Activated naive CD4-positive, alpha-beta T cell treated with anti-CD3 and anti-CD28 coated beads for 36 hours (primary cell): ENCODE measurements at regions of chr12 and their contacts with region 1.

Region 1: DNA sequence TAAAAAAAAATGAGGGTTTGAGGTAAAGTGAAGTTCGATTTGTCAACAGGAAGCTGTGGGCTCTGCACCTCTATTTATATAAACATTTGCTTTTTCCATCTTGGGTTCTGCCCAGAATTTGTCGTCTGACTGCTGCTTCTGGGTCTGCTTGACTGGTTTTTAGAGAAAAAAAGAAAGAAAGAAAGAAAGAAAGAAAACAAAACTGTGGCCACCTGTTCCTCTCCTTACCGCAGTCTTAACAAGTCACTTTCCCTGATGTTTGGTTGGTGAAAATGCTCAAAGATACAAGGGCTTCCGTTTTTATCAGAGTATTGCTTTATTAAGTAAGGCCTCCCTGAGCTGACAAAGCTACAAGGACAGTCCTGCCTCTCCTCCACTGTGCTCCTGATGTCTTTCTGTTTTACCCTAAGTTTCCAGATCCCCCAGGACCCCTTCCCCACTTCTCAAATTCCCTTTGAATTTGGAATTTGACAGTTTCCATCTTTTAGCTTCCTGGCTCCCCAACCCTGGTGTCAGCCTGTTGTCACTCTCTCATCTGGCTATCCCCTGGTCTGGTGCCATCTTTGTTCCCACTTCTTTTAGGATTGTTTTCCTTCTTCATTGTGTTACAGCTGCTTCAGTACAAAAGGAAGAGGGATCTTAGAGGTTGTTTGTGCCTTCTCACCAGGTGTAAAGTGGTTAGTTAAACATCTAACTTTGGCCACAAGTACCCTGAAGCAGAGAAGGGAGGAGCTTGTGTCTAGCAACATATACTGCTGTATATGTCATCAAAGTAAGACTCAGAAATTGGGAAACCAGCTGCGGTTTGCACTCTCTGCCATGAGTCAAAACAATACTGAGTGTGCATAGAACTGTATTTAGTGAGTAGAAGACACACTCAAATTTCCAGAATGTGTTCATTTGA is 18.0 kb downstream of the MFAP5 start:
- DNase-seq: peak; percentile 85
- H3K4me3 Mint-ChIP-seq: peak overlapping the region; percentile 47
- H3K27ac Mint-ChIP-seq: peak overlapping the region; percentile 86
- H3K4me1 Mint-ChIP-seq: peaks cover 36% of the 10 kb centered on the region
- H3K27me3 Mint-ChIP-seq: no peaks in the 10 kb centered on the region

Region 2: GRCh38 chr12:8065991-8066594 is 578.5 kb before region 1 on chr12 and contains the start of gene C3AR1:
- CTCF ChIA-PET with region 1: no interaction called
- intact Hi-C with region 1: loop called (anchors 5 kb)
- DNase-seq: peak; percentile 44
- H3K4me3 Mint-ChIP-seq: peak within 1 kb of the TSS; percentile 22
- H3K27ac Mint-ChIP-seq: peak within 1 kb of the TSS; percentile 63
- H3K4me1 Mint-ChIP-seq: peaks cover 26% of the 10 kb centered on the region
- H3K27me3 Mint-ChIP-seq: no peaks in the 10 kb centered on the region
- total RNA-seq, gene C3AR1: 0.21 to 0.25 TPM

Region 3: DNA sequence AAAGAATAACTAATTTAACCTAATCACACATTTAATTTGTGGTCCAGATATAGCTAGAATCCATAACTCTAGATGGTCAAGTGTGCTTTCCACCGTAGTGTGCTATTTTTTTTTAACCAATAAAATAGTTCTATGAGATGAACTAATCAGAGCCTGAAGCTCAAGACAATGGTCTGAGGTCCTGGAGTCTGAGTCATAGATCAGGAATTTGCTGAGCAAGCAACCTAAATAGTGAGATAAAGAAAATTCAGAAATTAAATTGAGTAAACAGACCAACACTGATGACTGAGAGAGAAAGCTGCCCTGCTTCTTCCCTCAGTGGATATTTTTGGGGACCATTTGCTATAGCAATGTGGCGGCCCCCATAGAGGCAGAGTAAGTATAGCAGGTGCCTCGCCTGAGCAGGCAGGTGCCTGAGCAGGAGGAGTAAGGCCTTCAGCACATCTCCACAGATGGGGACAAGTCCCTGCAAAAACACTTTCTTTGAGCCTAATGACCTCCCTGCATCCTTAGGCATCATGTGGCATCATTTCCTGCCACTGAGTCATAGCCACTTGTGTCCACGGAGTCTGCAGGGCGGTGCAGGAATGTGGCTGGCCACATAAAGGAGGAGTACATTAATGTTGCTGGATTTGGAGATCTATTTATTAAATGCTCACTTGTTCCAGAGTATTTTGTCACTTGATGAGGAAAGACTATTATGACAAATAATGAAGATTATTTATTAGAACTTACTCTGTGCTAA is 90.0 kb before region 1 on chr12:
- CTCF ChIA-PET with region 1: no interaction called
- intact Hi-C with region 1: loop called (anchors 5 kb)
- DNase-seq: no peak
- H3K4me3 Mint-ChIP-seq: no peak overlapping the region
- H3K27ac Mint-ChIP-seq: no peak overlapping the region
- H3K4me1 Mint-ChIP-seq: peaks cover 11% of the 10 kb centered on the region
- H3K27me3 Mint-ChIP-seq: no peaks in the 10 kb centered on the region

Region 4: DNA sequence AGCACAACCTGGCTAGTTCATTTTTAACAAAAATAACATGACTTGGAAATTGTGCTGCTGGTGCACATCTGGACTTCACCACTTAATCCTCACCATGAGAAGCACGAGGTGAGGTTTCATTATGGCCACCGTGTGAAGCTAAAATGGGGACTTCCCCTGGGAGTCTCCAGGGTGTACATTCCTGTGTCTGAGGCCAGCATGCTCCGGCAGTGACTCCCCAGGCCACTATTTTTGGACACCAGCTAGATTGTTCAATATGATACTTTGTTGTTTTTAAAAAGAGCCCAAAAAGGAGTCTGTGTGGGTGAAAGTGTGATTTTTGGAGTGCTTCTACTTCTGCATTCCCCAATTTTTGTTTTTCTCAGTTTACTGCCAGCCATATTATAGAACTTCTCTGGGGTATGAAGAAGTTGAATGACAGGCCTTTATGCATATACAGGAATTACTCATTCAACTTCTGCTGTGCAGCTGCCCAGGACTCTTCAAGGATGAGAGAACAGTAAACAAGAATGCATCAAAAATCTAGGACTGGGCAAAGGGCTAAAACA is 15.0 kb before region 1 on chr12:
- CTCF ChIA-PET with region 1: no interaction called
- intact Hi-C with region 1: no loop called
- DNase-seq: no peak
- H3K4me3 Mint-ChIP-seq: no peak overlapping the region
- H3K27ac Mint-ChIP-seq: no peak overlapping the region
- H3K4me1 Mint-ChIP-seq: no peaks in the 10 kb centered on the region
- H3K27me3 Mint-ChIP-seq: peaks cover 2% of the 10 kb centered on the region

Region 5: GRCh38 chr12:8681041-8681902 is 36.7 kb after region 1 on chr12:
- CTCF ChIA-PET with region 1: no interaction called
- intact Hi-C with region 1: no loop called
- DNase-seq: no peak
- H3K4me3 Mint-ChIP-seq: no peak overlapping the region
- H3K27ac Mint-ChIP-seq: no peak overlapping the region
- H3K4me1 Mint-ChIP-seq: peaks cover 4% of the 10 kb centered on the region
- H3K27me3 Mint-ChIP-seq: no peaks in the 10 kb centered on the region

Region 6: DNA sequence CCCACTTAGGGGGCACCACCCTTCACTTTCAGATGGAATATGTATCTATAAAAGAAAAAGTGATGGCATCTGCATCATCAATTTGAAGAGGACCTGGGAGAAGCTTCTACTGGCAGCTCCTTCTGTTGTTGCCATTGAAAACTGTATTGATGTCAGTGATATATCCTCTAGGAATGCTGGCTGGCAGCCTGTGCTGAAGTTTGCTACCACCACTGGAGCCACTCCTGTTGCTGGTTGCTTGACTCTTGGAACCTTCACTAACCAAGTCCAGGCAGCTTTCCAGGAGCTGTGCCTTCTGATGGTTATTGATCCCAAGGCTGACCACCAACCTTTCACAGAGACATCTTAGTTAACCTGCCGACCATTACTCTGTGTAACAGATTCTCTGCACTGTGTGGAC is 97.9 kb after region 1 on chr12:
- CTCF ChIA-PET with region 1: no interaction called
- intact Hi-C with region 1: no loop called
- DNase-seq: no peak
- H3K4me3 Mint-ChIP-seq: no peak overlapping the region
- H3K27ac Mint-ChIP-seq: no peak overlapping the region
- H3K4me1 Mint-ChIP-seq: no peaks in the 10 kb centered on the region
- H3K27me3 Mint-ChIP-seq: no peaks in the 10 kb centered on the region